Transverse colon (tissue), 4 donors: ENCODE measurements at regions of chr18 and their contacts with region 1.

Region 1: DNA sequence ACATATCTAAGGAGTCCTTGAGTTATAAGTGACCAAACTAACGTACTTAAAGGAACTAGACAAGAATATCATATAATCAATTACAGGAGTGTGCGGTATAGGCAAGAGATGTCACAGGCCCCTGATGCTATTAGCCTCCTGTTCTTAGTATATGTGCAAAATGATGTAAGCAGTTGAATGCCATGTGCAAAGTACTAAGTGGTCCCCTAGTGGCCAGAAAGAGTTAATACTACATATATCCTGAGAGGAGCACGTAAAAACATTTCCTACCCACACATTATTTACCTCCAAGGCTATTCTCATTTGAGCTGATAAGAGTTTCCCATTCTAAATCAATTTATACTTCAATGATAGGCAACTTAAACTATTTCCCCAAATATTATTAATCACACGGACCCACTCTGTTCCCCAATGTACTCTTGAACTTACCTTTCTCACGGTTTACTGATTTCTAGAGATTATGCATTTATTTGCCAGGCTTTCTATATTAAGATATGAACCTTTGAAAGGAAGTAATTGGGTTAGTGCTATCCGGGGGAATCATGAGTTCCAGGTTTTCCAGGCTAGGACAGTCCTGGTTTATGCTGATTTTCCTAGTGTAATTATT is 158.0 kb upstream of the KLHL14 start:
- DNase-seq: no peak
- H3K4me3 ChIP-seq: no peak overlapping the region
- H3K27ac ChIP-seq: no peak overlapping the region
- H3K4me1 ChIP-seq: no peaks in the 10 kb centered on the region
- H3K27me3 ChIP-seq: no peaks in the 10 kb centered on the region
- CTCF ChIP-seq: peak in 4 of 5 experiments; percentile 24 to 45 (median 36)
- EP300 ChIP-seq: no peak
- POLR2A ChIP-seq: no peak

Region 2: DNA sequence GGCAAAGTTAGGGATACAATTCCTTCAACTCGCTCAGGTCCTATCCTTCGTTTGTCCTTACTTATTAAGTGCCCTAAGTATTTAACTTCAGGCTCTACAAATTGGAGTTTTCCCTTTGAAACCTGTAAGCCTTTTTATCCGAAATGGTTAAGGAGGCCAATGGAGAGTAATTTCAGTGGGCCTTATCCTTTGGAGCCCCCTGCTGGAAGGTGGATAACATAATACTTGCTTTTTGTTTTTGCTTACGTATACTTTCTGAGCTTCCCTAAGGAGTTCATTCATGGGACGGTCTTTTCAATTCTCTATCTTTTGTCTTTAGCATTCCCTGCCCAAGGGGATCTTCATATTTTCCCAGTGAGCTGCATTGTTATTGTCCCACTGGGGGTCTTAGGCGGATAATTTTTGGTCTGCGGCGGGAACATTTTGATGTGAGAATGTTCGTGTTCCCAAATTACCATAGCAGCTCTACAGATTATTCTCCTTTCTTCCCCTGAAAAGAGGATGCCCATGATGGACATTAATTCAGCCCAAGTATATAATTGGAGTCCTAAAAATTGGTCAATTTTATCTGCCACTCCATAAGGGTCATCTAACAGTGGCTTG is 953.4 kb before region 1 on chr18:
- in situ Hi-C with region 1: no loop called
- intact Hi-C with region 1: no loop called
- DNase-seq: peak; percentile 18
- H3K4me3 ChIP-seq: no peak overlapping the region
- H3K27ac ChIP-seq: no peak overlapping the region
- H3K4me1 ChIP-seq: no peaks in the 10 kb centered on the region
- H3K27me3 ChIP-seq: no peaks in the 10 kb centered on the region
- CTCF ChIP-seq: peak; percentile 45 to 64 (median 48)
- EP300 ChIP-seq: no peak
- POLR2A ChIP-seq: no peak

Region 3: DNA sequence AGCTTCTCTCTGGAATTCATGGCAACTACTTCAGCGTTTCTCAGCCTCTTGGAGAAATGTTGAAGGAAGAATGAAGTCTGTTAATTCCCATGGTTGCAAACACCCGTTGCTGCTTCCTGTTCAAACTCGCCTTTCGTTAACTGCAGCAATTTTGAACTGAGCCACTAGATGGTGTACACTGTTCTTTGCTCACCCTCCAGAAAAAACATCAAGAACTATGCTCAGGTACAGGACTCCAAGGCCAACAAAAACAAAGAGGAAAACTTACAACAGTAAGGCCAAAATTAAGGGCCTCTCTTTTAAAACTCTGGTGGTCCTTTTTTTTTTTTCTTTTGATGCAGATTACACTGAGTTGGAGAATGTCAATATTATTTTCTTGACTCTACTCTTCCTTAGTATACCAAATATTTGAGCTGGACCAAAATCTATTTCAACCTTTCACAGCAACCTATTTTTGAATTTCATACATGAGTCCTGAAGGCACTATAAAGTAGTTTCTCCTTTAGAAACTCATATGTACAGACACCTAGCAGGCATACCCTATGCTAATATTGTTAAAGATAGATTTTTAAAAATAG is 216.1 kb before region 1 on chr18:
- in situ Hi-C with region 1: loop called in 1 of 4 experiments (anchors 25 kb)
- intact Hi-C with region 1: no loop called
- DNase-seq: peak; percentile 31
- H3K4me3 ChIP-seq: no peak overlapping the region
- H3K27ac ChIP-seq: no peak overlapping the region
- H3K4me1 ChIP-seq: no peaks in the 10 kb centered on the region
- H3K27me3 ChIP-seq: no peaks in the 10 kb centered on the region
- CTCF ChIP-seq: peak; percentile 55 to 64 (median 62)
- EP300 ChIP-seq: no peak
- POLR2A ChIP-seq: no peak

Region 4: GRCh38 chr18:32847691-32848090 is 83.1 kb before region 1 on chr18:
- in situ Hi-C with region 1: loop called in 1 of 4 experiments (anchors 25 kb)
- intact Hi-C with region 1: no loop called
- DNase-seq: no peak
- H3K4me3 ChIP-seq: no peak overlapping the region
- H3K27ac ChIP-seq: no peak overlapping the region
- H3K4me1 ChIP-seq: no peaks in the 10 kb centered on the region
- H3K27me3 ChIP-seq: no peaks in the 10 kb centered on the region
- CTCF ChIP-seq: no peak
- EP300 ChIP-seq: no peak
- POLR2A ChIP-seq: no peak